Esophagus muscularis mucosa (tissue), 4 donors: ENCODE measurements at regions of chr1 and their contacts with region 1.

Region 1: GRCh38 chr1:161153679-161154426 is at the start of gene UFC1:
- DNase-seq: peak; percentile 95
- H3K4me3 ChIP-seq: peak within 1 kb of the TSS; percentile 63 to 73 (median 64)
- H3K27ac ChIP-seq: peak within 1 kb of the TSS; percentile 84 to 92 (median 85)
- H3K4me1 ChIP-seq: peaks cover 14 to 31% (median 25%) of the 10 kb centered on the region in 4 donors
- H3K27me3 ChIP-seq: no peaks in the 10 kb centered on the region
- CTCF ChIP-seq: no peak
- EP300 ChIP-seq: no peak
- POLR2A ChIP-seq: no peak
- total RNA-seq, gene UFC1: 62.8 to 86.1 (median 71.6) TPM

Region 2: GRCh38 chr1:161132410-161133219 is 21.2 kb before region 1 on chr1 and contains the start of gene DEDD:
- intact Hi-C with region 1: loop called (anchors 2 kb)
- DNase-seq: peak; percentile 99
- H3K4me3 ChIP-seq: peak within 1 kb of the TSS; percentile 72 to 84 (median 81)
- H3K27ac ChIP-seq: peak within 1 kb of the TSS; percentile 93 to 96 (median 96)
- H3K4me1 ChIP-seq: peaks cover 31 to 61% (median 61%) of the 10 kb centered on the region in 4 donors
- H3K27me3 ChIP-seq: no peaks in the 10 kb centered on the region
- CTCF ChIP-seq: no peak
- EP300 ChIP-seq: peak; percentile 69
- POLR2A ChIP-seq: peak; percentile 41
- total RNA-seq, gene DEDD: 37.0 to 82.5 (median 47.7) TPM